ENCODE measurements at regions of chr12 and their contacts with region 1.

Region 1: DNA sequence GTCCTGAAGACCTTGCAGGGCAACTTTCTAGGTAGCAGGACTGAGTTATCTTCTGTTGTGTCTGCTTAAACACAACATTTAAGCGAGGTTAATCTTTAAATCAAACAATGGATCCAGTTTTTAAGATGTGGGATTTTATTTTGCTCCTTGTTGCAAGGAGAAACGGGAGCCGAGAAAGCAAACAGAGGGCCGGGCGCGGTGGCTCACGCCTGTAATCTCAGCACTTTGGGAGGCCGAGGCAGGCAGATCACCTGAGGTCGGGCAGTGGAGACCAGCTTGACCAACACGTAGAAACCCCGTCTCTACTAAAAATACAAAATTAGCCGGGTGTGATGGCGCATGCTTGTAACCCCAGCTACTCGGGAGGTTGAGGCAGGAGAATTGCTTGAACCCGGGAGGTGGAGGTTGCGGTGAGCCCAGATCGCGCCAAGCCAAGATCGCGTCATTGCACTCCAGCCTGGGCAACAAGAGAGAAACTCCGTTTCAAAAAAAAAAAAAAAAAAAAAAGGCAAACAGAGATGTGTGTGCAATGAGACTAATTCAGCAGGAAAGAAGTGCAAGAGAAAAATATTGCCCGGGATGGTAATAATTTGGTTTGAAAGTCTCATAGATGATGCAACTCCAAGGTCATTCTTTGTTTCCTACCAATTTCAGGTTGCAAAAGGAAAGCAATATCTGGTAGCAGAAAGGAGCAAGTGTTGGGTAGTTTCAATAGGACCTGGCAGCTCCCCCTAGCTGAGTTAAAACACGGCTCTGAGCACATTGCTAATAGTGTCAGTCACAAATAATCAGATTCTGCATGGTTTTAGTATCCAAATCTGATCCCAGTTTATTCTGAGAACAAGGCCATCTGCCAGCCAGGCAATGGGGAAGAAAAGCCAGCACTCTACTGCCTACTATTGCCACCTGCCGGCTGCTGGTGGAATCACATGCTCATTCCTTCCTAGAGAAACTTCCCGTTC is 141.4 kb downstream of the PPM1H start:
- DNase-seq: peak; percentile 91
- H3K4me3 ChIP-seq: no peak overlapping the region
- H3K27ac ChIP-seq: no peak overlapping the region
- H3K4me1 ChIP-seq: peaks cover 16% of the 10 kb centered on the region
- H3K27me3 ChIP-seq: no peaks in the 10 kb centered on the region
- CTCF ChIP-seq: peak; percentile 87 to 92
- POLR2A ChIP-seq: no peak

Region 2: GRCh38 chr12:62032870-62033269 is 760.7 kb before region 1 on chr12:
- CTCF ChIA-PET with region 1: no interaction called
- POLR2A ChIA-PET with region 1: no interaction called
- dilution Hi-C with region 1: no loop called
- intact Hi-C with region 1: no loop called
- DNase-seq: no peak
- H3K4me3 ChIP-seq: no peak overlapping the region
- H3K27ac ChIP-seq: no peak overlapping the region
- H3K4me1 ChIP-seq: no peaks in the 10 kb centered on the region
- H3K27me3 ChIP-seq: no peaks in the 10 kb centered on the region
- CTCF ChIP-seq: no peak
- POLR2A ChIP-seq: no peak

Region 3: DNA sequence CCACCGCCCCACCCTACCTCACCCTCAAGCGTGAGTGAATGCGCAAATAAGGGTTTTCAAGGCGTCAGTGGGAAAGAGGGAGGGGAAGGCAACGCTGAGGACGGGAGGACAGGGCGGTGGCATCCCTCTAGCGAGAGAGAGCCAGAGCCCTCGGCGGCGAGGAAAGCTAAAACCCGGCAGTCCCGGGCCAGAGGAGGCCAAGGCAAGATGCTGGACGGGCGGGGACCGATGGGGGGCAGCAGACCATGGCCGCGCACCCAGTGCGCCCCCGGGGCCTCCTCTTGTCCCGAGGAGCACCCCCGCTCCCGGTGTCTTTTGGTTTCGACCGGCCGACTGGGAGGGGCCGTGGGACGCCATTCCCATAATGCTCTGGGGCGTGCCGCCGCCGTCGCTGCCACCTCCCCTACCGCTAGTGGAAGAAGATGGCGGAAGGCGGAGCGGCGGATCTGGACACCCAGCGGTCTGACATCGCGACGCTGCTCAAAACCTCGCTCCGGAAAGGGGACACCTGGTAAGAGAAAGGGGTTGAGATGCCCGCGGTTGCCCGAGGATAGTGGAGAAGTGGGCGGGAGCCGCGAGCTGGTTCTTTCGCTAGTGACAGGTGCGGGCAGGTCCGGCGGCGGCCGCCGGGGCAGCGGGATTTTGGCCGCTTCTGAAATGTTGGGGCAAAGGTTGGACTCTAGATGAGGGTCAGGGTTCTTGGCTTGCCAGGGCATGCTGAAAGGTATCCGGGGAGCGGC is 533.4 kb before region 1 on chr12 and contains the start of gene USP15:
- CTCF ChIA-PET with region 1: interaction called, 6 read pairs
- POLR2A ChIA-PET with region 1: no interaction called
- dilution Hi-C with region 1: no loop called
- intact Hi-C with region 1: loop called (anchors 5 kb)
- DNase-seq: peak; percentile 97
- H3K4me3 ChIP-seq: peak within 1 kb of the TSS; percentile 65 to 97 (median 93)
- H3K27ac ChIP-seq: peak within 1 kb of the TSS; percentile 71
- H3K4me1 ChIP-seq: peaks cover 19% of the 10 kb centered on the region
- H3K27me3 ChIP-seq: no peaks in the 10 kb centered on the region
- CTCF ChIP-seq: peak; percentile 84 to 96
- POLR2A ChIP-seq: peak; percentile 78
- total RNA-seq, gene USP15: 61.8 and 66.2 TPM in 2 replicates

Region 4: GRCh38 chr12:62522984-62523383 is 270.6 kb before region 1 on chr12:
- CTCF ChIA-PET with region 1: interaction called, 9 read pairs
- POLR2A ChIA-PET with region 1: no interaction called
- dilution Hi-C with region 1: no loop called
- intact Hi-C with region 1: loop called (anchors 1 kb)
- DNase-seq: no peak
- H3K4me3 ChIP-seq: no peak overlapping the region
- H3K27ac ChIP-seq: no peak overlapping the region
- H3K4me1 ChIP-seq: no peaks in the 10 kb centered on the region
- H3K27me3 ChIP-seq: no peaks in the 10 kb centered on the region
- CTCF ChIP-seq: no peak
- POLR2A ChIP-seq: no peak

Region 5: DNA sequence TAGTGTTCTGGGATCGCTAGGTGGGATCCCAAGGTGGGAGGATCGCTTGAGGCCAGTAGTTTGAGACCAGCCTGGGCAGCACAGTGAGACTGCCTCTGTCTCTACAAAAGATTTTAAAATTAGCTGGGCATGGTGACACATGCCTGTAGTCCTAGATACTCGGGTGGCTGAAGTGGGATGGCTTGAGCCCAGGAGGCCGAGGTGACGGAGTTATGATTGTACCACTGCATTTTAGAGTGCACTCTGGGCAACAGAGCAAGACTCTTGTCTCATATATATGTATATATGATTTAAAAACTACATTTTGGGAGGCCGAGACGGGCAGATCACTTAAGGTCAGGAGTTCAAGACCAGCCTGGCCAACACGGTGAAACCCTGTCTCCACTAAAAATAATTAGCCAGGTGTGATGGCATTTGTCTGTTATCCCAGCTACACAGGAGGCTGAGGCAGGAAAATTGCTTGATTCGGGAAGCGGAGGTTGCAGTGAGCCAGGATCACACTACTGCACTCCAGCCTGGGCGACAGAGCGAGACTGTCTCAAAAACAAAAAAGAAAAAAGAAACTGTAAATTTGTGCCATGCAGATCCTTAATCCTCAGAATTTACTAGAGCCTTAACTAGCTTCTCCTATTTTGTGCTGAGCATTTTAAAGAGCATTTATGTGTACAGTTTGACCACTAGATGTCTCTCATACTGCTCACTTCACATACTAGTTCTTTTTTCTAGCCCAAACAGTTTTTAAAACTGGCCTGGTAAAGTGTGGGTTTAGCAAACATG is 212.1 kb before region 1 on chr12:
- CTCF ChIA-PET with region 1: interaction called, 356 read pairs
- POLR2A ChIA-PET with region 1: interaction called, 3 read pairs
- dilution Hi-C with region 1: no loop called
- intact Hi-C with region 1: loop called (anchors 1 kb)
- DNase-seq: peak; percentile 58
- H3K4me3 ChIP-seq: no peak overlapping the region
- H3K27ac ChIP-seq: no peak overlapping the region
- H3K4me1 ChIP-seq: no peaks in the 10 kb centered on the region
- H3K27me3 ChIP-seq: no peaks in the 10 kb centered on the region
- CTCF ChIP-seq: peak; percentile 43 to 58
- POLR2A ChIP-seq: no peak

Region 6: GRCh38 chr12:62631471-62632410 is 161.8 kb before region 1 on chr12:
- CTCF ChIA-PET with region 1: interaction called, 12 read pairs
- POLR2A ChIA-PET with region 1: no interaction called
- dilution Hi-C with region 1: no loop called
- intact Hi-C with region 1: loop called (anchors 1 kb)
- DNase-seq: peak; percentile 68
- H3K4me3 ChIP-seq: peak overlapping the region; percentile 47 to 79 (median 63)
- H3K27ac ChIP-seq: peak overlapping the region; percentile 1
- H3K4me1 ChIP-seq: peaks cover 17% of the 10 kb centered on the region
- H3K27me3 ChIP-seq: no peaks in the 10 kb centered on the region
- CTCF ChIP-seq: peak; percentile 29 to 52
- POLR2A ChIP-seq: no peak